ENCODE measurements at regions of chr16 and their contacts with region 1.

Region 1: DNA sequence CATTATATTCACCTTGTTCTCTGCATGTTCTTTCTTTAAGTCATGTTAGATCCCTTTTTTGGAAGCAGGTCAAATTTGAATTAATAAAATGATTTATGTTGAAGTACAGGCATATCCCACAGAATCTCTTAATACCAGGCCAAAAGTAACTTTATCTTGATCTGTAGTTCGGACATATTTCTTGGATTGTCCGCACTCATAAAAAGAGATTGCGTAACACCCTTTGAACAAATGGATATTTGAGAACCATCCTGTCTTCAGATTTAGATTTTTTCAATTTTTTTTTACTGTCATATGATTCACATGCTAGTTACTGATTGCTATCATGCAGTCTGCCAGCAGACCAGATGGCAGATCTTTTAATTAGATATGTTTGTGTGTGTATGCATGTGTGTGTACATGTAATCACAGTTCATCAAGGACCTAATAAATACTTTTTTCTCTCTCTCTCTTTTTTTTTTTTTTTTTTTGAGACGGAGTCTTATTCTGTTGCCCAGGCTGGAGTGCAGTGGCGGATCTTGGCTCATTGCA is 352.6 kb downstream of the WWOX start:
- DNase-seq: no peak
- ATAC-seq: no peak
- H3K4me3 Mint-ChIP-seq: no peak overlapping the region
- H3K27ac Mint-ChIP-seq: no peak overlapping the region
- H3K4me1 Mint-ChIP-seq: no peaks in the 10 kb centered on the region
- H3K27me3 Mint-ChIP-seq: no peaks in the 10 kb centered on the region
- CTCF ChIP-seq: no peak

Region 2: GRCh38 chr16:78390092-78390491 is 62.0 kb before region 1 on chr16:
- CTCF ChIA-PET with region 1: no interaction called
- POLR2A ChIA-PET with region 1: no interaction called
- intact Hi-C with region 1: no loop called
- DNase-seq: no peak
- ATAC-seq: no peak
- H3K4me3 Mint-ChIP-seq: no peak overlapping the region
- H3K27ac Mint-ChIP-seq: no peak overlapping the region
- H3K4me1 Mint-ChIP-seq: no peaks in the 10 kb centered on the region
- H3K27me3 Mint-ChIP-seq: no peaks in the 10 kb centered on the region
- CTCF ChIP-seq: no peak

Region 3: DNA sequence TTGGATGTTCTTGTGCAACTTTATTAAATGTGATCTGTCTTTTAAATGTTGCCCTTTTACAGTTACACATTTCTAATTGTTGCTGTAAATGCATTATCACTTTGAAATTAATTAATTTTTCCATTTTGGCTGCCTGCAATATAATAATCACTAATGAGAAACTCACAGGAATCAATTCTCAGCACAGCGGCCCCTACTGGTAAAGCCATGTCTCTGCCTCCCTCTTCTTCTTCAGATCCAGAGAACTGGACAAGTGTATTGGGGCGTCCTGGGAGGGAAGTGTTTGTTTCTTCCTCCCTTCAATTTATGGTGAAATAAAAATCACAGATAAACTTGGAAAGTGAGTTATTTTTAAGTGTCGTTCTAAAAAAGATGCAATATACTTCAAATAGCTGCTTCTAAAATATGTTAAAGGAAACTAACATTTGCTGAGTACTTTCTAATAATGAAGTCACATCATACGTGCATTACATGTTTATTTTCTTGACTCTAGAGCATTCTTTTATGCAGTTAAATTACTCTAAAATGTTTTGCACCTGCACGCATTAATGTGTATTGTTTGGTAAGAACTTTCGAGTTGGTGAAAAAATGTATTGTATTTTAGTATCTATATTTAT is 14.6 kb before region 1 on chr16:
- CTCF ChIA-PET with region 1: interaction called, 10 read pairs
- POLR2A ChIA-PET with region 1: no interaction called
- intact Hi-C with region 1: no loop called
- DNase-seq: peak; percentile 17
- ATAC-seq: no peak
- H3K4me3 Mint-ChIP-seq: no peak overlapping the region
- H3K27ac Mint-ChIP-seq: no peak overlapping the region
- H3K4me1 Mint-ChIP-seq: no peaks in the 10 kb centered on the region
- H3K27me3 Mint-ChIP-seq: no peaks in the 10 kb centered on the region
- CTCF ChIP-seq: peak; percentile 94

Region 4: DNA sequence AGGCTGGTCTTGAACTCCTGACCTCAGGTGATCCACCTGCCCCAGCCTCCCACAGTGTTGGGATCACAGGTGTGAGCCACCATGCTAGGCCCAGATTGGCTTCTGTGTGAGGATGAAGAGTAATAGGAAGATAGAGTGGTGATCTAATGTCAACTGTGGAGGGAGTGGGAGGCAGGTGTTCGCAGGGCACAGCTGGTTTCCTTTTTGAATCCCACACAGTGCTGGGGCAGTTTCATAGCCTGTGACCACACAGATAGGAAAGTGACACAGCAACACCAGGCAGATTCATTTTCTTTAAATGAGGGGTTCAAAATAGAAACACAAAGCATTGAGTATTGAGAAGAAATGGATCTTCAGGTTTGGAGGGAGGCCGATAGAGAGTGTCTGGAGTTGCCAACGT is 187.7 kb after region 1 on chr16:
- CTCF ChIA-PET with region 1: no interaction called
- POLR2A ChIA-PET with region 1: no interaction called
- intact Hi-C with region 1: no loop called
- DNase-seq: peak; percentile 36
- ATAC-seq: peak; percentile 45
- H3K4me3 Mint-ChIP-seq: no peak overlapping the region
- H3K27ac Mint-ChIP-seq: peak overlapping the region; percentile 47
- H3K4me1 Mint-ChIP-seq: peaks cover 5% of the 10 kb centered on the region
- H3K27me3 Mint-ChIP-seq: peaks cover 4% of the 10 kb centered on the region
- CTCF ChIP-seq: no peak